CD8-positive, alpha-beta memory T cell (primary cell): ENCODE measurements at regions of chr14 and their contacts with region 1.

Region 1: GRCh38 chr14:105300792-105301533 is at the start of gene BRF1:
- DNase-seq: peak; percentile 97 to 99 (median 99)
- H3K4me3 ChIP-seq: peak within 1 kb of the TSS; percentile 80
- H3K4me3 Mint-ChIP-seq: peak within 1 kb of the TSS; percentile 88 to 96 (median 91)
- H3K27ac ChIP-seq: peak within 1 kb of the TSS; percentile 71
- H3K27ac Mint-ChIP-seq: peak within 1 kb of the TSS; percentile 90 to 96 (median 94)
- H3K4me1 ChIP-seq: peaks cover 29% of the 10 kb centered on the region
- H3K4me1 Mint-ChIP-seq: peaks cover 31 to 42% (median 37%) of the 10 kb centered on the region in 3 donors
- H3K27me3 ChIP-seq: no peaks in the 10 kb centered on the region
- H3K27me3 Mint-ChIP-seq: no peaks in the 10 kb centered on the region
- total RNA-seq, gene BRF1: 29.4 to 31.7 TPM

Region 2: DNA sequence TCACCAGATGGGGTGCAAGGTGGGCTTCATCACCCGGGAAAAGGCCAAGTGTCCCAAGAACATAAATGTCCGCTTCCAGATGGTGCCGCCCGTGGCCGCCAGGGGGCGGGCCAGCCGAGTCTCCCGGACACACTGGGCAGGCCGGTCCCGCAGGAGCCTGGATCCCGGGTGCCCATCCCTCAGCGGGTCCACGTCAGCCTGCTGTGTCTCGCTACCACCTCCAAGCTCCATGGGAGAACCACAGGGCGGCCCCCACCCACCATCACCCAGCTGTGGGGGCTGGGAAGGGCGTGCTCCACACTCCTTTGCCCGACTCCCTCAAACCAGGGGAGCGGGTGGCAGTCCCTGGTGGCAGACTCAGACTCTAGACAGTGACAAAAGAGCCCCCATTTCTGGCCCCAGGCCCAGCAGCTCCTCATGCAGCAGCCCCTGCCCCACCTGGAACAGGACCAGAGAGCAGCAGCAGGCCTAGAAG is 97.9 kb before region 1 on chr14:
- CTCF ChIA-PET with region 1: interaction called, 4 read pairs
- POLR2A ChIA-PET with region 1: interaction called, 10 read pairs
- DNase-seq: peak; percentile 42 to 72 (median 55)
- H3K4me3 ChIP-seq: no peak overlapping the region
- H3K4me3 Mint-ChIP-seq: no peak overlapping the region
- H3K27ac ChIP-seq: no peak overlapping the region
- H3K27ac Mint-ChIP-seq: no peak overlapping the region
- H3K4me1 ChIP-seq: peaks cover 19% of the 10 kb centered on the region
- H3K4me1 Mint-ChIP-seq: peaks cover 0 to 14% (median 5%) of the 10 kb centered on the region in 3 donors
- H3K27me3 ChIP-seq: peaks cover 6% of the 10 kb centered on the region
- H3K27me3 Mint-ChIP-seq: peaks cover 25 to 26% of the 10 kb centered on the region in 2 donors

Region 3: GRCh38 chr14:105248368-105248756 is 52.6 kb before region 1 on chr14 and contains the start of gene BTBD6:
- CTCF ChIA-PET with region 1: interaction called, 11 read pairs
- POLR2A ChIA-PET with region 1: interaction called, 15 read pairs
- DNase-seq: peak; percentile 83 to 90 (median 87)
- H3K4me3 ChIP-seq: peak within 1 kb of the TSS; percentile 82
- H3K4me3 Mint-ChIP-seq: peak within 1 kb of the TSS; percentile 76 to 90 (median 79)
- H3K27ac ChIP-seq: peak within 1 kb of the TSS; percentile 51
- H3K27ac Mint-ChIP-seq: peak within 1 kb of the TSS; percentile 75 to 96 (median 84)
- H3K4me1 ChIP-seq: peaks cover 17% of the 10 kb centered on the region
- H3K4me1 Mint-ChIP-seq: peaks cover 18 to 46% (median 45%) of the 10 kb centered on the region in 3 donors
- H3K27me3 ChIP-seq: no peaks in the 10 kb centered on the region
- H3K27me3 Mint-ChIP-seq: no peaks in the 10 kb centered on the region
- total RNA-seq, gene BTBD6: 54.1 to 55.0 TPM

Region 4: DNA sequence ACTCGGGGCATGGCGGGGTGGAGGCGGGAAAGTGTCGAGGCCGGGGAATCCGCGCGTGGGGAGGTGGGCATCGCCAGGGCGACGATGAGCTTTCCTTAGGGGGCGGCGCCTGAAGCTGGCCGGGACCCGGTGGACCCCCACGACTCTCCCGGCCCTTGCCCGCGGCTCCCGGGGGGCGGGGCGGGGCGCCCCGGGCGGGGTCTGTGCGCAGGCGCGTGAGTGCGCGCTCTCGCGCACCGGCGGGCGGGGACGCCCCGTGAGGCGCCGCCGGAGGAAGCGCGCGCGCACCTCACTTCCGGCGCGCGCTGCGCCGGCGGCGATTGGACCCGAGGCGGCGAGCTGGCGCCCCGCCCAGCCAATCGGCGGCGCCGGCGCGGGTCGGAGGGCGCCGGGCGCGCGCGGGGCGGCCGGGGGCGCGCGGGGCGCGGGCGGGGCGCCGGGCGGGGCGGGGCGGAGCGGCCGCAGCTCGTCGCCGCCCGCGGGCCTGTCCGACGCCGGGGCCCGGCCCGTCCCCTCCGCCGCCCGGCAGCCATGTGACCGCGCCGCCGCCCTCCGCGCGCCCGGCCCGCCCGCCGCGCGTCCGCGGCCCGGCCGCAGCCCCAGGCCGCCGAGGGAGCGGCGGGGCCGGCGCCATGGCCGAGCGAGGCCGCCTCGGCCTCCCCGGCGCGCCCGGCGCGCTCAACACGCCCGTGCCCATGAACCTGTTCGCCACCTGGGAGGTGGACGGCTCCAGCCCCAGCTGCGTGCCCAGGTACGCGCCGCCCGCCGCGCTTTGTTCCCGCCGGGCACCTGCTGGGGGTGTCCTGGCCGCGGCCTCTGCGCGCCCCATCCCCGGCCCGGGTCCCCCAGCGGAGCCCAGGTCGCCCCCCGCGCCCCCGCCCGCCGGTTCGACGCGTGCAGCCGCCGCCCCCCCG is 13.6 kb after region 1 on chr14 and contains the start of gene PACS2:
- CTCF ChIA-PET with region 1: interaction called, 10 read pairs
- POLR2A ChIA-PET with region 1: interaction called, 35 read pairs
- DNase-seq: peak; percentile 71 to 84 (median 82)
- H3K4me3 ChIP-seq: peak within 1 kb of the TSS; percentile 55
- H3K4me3 Mint-ChIP-seq: peak within 1 kb of the TSS; percentile 84 to 94 (median 89)
- H3K27ac ChIP-seq: peak within 1 kb of the TSS; percentile 16
- H3K27ac Mint-ChIP-seq: peak within 1 kb of the TSS; percentile 79 to 96 (median 88)
- H3K4me1 ChIP-seq: peaks cover 16% of the 10 kb centered on the region
- H3K4me1 Mint-ChIP-seq: peaks cover 9 to 35% (median 27%) of the 10 kb centered on the region in 3 donors
- H3K27me3 ChIP-seq: no peaks in the 10 kb centered on the region
- H3K27me3 Mint-ChIP-seq: no peaks in the 10 kb centered on the region
- total RNA-seq, gene PACS2: 31.0 to 32.9 TPM

Region 5: DNA sequence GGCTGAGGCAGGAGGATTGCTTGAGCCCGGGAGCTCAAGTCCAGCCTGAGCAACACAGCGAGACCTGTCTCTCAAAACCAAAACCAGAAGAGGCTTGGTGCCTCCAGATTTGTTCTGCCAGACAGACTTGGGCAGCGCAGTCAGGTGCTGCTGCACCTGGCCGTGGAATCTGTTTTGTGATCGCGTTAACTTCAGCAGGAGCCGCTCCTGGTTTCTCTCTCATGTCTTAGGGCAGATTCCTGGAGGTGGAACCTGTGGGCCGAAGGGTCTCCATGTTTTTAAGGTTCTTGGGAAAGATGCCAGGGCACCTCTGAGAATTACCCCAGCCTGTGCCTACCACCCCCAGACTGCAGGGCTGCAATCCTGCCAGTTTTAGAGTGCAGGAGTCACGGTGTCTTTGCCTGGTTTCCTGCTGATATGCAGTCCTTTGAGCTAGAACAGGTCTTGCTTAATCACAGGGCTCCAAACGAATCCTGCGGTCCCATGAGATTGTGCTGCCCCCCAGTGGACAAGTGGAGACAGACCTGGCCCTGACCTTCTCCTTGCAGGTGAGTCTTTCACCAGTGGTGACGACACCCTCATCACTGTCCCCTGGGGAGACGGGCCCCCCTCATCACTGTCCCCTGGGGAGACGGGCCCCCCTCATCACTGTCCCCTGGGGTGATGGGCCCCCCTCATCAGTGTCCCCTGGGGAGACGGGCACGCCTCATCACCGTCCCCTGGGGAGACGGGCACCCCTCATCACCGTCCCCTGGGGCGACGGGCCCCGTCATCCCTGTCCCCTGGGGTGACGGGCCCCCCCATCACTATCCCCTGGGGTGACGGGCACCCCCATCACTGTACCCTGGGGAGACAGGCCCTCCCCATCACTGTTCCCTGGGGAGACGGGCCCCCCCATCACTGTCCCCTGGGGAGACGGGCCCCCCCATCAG is 51.2 kb after region 1 on chr14:
- CTCF ChIA-PET with region 1: interaction called, 10 read pairs
- POLR2A ChIA-PET with region 1: no interaction called
- DNase-seq: peak; percentile 72 to 90 (median 77)
- H3K4me3 ChIP-seq: no peak overlapping the region
- H3K4me3 Mint-ChIP-seq: no peak overlapping the region
- H3K27ac ChIP-seq: no peak overlapping the region
- H3K27ac Mint-ChIP-seq: peak overlapping the region in 3 of 8 donors; percentile 47 to 85 (median 73)
- H3K4me1 ChIP-seq: peaks cover 4% of the 10 kb centered on the region
- H3K4me1 Mint-ChIP-seq: peaks cover 0 to 6% (median 3%) of the 10 kb centered on the region in 3 donors
- H3K27me3 ChIP-seq: no peaks in the 10 kb centered on the region
- H3K27me3 Mint-ChIP-seq: no peaks in the 10 kb centered on the region

Region 6: DNA sequence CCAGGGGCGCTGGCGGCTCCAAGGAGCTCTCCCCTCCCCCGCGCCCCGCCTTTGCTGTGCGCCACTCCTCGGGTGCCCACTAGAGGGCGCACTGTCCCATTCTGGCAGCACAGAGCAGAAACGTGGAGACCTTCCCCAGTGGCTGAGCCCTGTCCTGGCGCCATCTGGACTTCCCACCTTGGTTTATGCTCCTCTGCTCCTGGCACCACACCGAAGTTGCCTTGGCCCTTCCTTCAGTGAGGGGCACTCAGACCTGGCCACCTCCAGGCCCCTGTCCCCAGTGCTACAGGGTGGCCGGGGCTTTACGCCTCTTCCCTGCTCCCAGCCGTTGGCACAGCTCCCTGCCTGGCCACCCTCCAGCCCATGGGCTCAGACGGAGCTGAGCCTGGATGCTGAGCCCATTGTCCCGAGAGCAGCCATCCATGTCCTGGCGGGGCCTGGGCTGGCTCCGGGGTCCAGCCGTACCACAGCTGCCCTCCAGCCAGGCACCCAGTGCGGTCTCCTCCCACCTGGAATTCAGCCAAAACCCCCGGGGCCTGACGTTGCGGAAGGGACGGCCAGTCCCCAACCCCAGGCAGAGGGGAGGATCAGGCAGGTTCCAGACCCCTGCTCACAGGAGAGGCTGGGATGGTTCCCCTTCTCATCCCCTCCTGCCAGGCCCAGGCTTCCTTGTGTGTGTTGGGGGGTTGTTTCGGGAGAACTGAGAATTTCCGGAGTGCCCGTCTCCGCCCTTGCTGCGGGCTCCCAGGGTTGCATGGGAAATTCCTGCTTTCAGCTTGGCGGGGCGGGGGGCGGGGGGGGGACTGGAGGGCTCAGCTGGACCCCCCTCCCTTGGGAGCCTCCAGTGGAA is 180.2 kb after region 1 on chr14:
- CTCF ChIA-PET with region 1: interaction called, 10 read pairs
- POLR2A ChIA-PET with region 1: no interaction called
- DNase-seq: peak; percentile 83 to 91 (median 87)
- H3K4me3 ChIP-seq: peak overlapping the region; percentile 80
- H3K4me3 Mint-ChIP-seq: peak overlapping the region; percentile 78 to 94 (median 85)
- H3K27ac ChIP-seq: peak overlapping the region; percentile 100
- H3K27ac Mint-ChIP-seq: peak overlapping the region; percentile 99 to 100 (median 100)
- H3K4me1 ChIP-seq: peaks cover 80% of the 10 kb centered on the region
- H3K4me1 Mint-ChIP-seq: peaks cover 37 to 76% (median 56%) of the 10 kb centered on the region in 3 donors
- H3K27me3 ChIP-seq: no peaks in the 10 kb centered on the region
- H3K27me3 Mint-ChIP-seq: peaks cover 0 to 12% of the 10 kb centered on the region in 2 donors